ENCODE measurements at regions of chr13 and their contacts with region 1.

Region 1: GRCh38 chr13:36724141-36724540 is 50.3 kb downstream of the SERTM1 start:
- DNase-seq: no peak
- ATAC-seq: no peak
- H3K4me3 ChIP-seq: no peak overlapping the region
- H3K27ac ChIP-seq: no peak overlapping the region
- H3K4me1 ChIP-seq: no peaks in the 10 kb centered on the region
- H3K27me3 ChIP-seq: no peaks in the 10 kb centered on the region
- CTCF ChIP-seq: no peak

Region 2: GRCh38 chr13:36420437-36420891 is 303.7 kb before region 1 on chr13:
- intact Hi-C with region 1: loop called in 1 of 3 experiments (anchors 10 kb)
- DNase-seq: peak; percentile 43 to 76 (median 68)
- ATAC-seq: peak; percentile 82 to 94 (median 92)
- H3K4me3 ChIP-seq: no peak overlapping the region
- H3K27ac ChIP-seq: no peak overlapping the region
- H3K4me1 ChIP-seq: peaks cover 0 to 8% (median 8%) of the 10 kb centered on the region in 3 donors
- H3K27me3 ChIP-seq: no peaks in the 10 kb centered on the region
- CTCF ChIP-seq: peak; percentile 59 to 82 (median 68)

Measured in pancreas (tissue), 10 donors.